ENCODE measurements at regions of chr9 and their contacts with region 1.

Region 1: DNA sequence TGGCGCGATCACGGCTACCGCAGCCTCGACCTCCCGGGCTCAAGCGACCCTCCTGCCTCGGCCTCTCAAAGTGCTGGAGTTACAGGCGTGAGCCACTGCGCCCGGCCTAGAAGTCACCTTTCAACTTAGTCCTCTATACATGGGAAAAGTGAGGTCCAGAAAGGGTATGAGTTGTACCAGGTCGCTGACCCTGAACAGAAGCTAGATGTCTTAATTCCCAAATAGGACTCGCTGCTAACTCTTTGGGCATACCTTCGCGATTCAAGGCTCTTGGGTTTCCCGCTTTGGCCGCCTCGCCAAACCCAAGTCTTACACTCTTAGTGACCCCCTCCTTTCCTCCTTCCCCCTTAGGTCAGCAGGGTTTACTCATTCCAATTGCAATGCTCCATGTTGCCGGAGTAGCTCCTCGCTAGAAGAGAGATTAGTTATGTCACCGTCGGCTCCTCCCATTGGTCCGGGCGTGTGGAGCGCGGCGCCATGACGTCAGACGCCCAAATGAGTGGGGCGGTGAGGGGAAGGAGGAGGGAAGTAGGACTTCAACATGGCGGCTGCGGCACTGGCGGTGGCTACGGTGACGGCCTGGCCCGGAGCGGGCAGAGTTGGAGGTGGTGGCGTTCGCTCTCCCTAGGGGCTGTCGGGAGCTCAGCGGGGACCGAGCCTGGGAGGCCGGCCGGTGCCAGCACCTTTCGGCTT is at the start of gene UBAP1:
- DNase-seq: peak; percentile 98
- H3K4me3 ChIP-seq: peak within 1 kb of the TSS; percentile 79 to 87
- H3K27ac ChIP-seq: peak within 1 kb of the TSS; percentile 94 to 96
- H3K4me1 ChIP-seq: peaks cover 0 to 23% (median 8%) of the 10 kb centered on the region in 4 donors
- H3K27me3 ChIP-seq: no peaks in the 10 kb centered on the region
- CTCF ChIP-seq: no peak

Region 2: GRCh38 chr9:34126207-34127034 is 52.2 kb before region 1 on chr9 and contains the start of gene DCAF12:
- intact Hi-C with region 1: loop called (anchors 5 kb)
- DNase-seq: peak; percentile 90 to 95
- H3K4me3 ChIP-seq: peak within 1 kb of the TSS; percentile 89 to 96
- H3K27ac ChIP-seq: peak within 1 kb of the TSS; percentile 82 to 86
- H3K4me1 ChIP-seq: peaks cover 0 to 40% (median 18%) of the 10 kb centered on the region in 4 donors
- H3K27me3 ChIP-seq: no peaks in the 10 kb centered on the region
- CTCF ChIP-seq: no peak

Region 3: GRCh38 chr9:34279411-34279810 is 100.7 kb after region 1 on chr9:
- intact Hi-C with region 1: no loop called
- DNase-seq: no peak
- H3K4me3 ChIP-seq: no peak overlapping the region
- H3K27ac ChIP-seq: no peak overlapping the region
- H3K4me1 ChIP-seq: no peaks in the 10 kb centered on the region
- H3K27me3 ChIP-seq: no peaks in the 10 kb centered on the region
- CTCF ChIP-seq: no peak

Measured in tibial artery (tissue), 4 donors.